BJ (cell line): ENCODE measurements at regions of chr12 and their contacts with region 1.

Region 1: DNA sequence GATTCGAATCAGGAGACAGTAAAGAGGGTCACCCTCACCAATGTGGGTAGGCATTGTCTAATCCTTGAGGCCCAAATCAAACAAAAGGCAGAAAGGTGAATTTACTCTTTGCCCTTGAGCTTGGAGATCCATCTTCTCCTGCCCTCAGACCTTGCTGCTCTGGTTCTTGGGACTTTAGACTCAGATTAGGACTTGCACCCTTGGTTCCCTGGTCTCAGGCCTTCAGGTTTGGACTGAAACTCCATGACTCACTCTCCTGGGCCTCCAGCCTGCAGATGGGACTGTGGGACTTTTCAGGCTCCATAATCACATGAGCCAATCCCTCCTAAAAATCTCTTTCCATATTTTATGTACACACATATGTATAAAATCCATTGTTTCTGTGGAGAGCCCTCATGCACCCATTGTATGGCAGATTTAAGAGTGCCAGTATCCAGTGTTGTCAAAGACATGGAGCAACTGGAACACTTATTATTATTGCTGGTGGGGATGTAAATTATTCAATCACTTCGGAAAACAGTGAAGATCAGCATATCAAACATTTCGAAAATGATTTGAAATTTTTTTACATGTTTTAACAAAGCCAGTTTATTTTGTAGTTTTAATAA is 48.7 kb downstream of the EID3 start:
- DNase-seq: no peak
- H3K4me3 ChIP-seq: no peak overlapping the region
- H3K27me3 ChIP-seq: no peaks in the 10 kb centered on the region
- CTCF ChIP-seq: no peak

Region 2: DNA sequence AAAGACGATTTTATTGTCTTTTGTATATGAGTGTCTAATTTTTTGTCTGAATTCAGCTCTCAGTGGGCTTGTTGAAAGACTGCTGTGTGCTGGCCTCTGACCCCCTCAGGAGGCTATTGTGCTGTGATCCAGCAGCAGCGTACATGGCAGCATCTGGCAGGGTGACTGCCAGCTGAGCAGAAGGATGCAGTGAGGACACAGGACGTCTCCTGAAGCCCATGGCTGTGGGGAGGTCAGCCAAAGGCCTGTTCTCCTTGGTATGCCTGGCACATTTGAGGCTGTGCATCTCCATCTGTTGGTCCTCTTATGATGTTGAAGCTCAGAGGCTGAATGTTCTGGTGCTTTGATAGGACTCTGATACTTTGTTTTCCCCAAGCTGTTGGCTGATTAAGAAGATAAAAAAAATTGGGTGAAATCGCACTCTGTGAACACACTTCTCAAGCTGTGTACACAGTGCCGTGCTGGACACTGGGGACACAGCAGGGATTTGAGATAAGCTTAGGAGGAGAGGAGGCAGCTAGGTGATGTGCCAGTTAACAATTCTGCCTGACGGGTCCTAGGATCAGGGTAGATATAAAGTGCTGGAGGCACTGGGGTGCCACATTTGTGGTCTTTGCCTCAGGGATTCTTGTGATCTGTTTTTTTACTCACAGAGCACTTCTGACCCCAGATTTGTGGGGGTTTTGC is 11.1 kb before region 1 on chr12:
- CTCF ChIA-PET with region 1: interaction called, 10 read pairs
- POLR2A ChIA-PET with region 1: no interaction called
- DNase-seq: no peak
- H3K4me3 ChIP-seq: no peak overlapping the region
- H3K27me3 ChIP-seq: no peaks in the 10 kb centered on the region
- CTCF ChIP-seq: no peak